ENCODE measurements at regions of chr7 and their contacts with region 1.

Region 1: GRCh38 chr7:3154912-3155494 is 111.3 kb upstream of the CARD11 start:
- DNase-seq: peak; percentile 17 to 33
- ATAC-seq: no peak
- H3K4me3 ChIP-seq: no peak overlapping the region
- H3K27ac ChIP-seq: no peak overlapping the region
- H3K4me1 ChIP-seq: no peaks in the 10 kb centered on the region
- H3K27me3 ChIP-seq: no peaks in the 10 kb centered on the region

Region 2: GRCh38 chr7:2880874-2881533 is 274.0 kb before region 1 on chr7:
- intact Hi-C with region 1: loop called (anchors 5 kb)
- DNase-seq: no peak
- ATAC-seq: no peak
- H3K4me3 ChIP-seq: no peak overlapping the region
- H3K27ac ChIP-seq: no peak overlapping the region
- H3K4me1 ChIP-seq: no peaks in the 10 kb centered on the region
- H3K27me3 ChIP-seq: no peaks in the 10 kb centered on the region

Region 3: GRCh38 chr7:2886900-2887299 is 268.1 kb before region 1 on chr7:
- intact Hi-C with region 1: loop called (anchors 5 kb)
- DNase-seq: no peak
- ATAC-seq: no peak
- H3K4me3 ChIP-seq: no peak overlapping the region
- H3K27ac ChIP-seq: no peak overlapping the region
- H3K4me1 ChIP-seq: no peaks in the 10 kb centered on the region
- H3K27me3 ChIP-seq: no peaks in the 10 kb centered on the region

Region 4: GRCh38 chr7:3082831-3083230 is 72.2 kb before region 1 on chr7:
- intact Hi-C with region 1: no loop called
- DNase-seq: no peak
- ATAC-seq: no peak
- H3K4me3 ChIP-seq: no peak overlapping the region
- H3K27ac ChIP-seq: no peak overlapping the region
- H3K4me1 ChIP-seq: no peaks in the 10 kb centered on the region
- H3K27me3 ChIP-seq: no peaks in the 10 kb centered on the region

Region 5: GRCh38 chr7:3200504-3200903 is 45.5 kb after region 1 on chr7:
- intact Hi-C with region 1: no loop called
- DNase-seq: no peak
- ATAC-seq: no peak
- H3K4me3 ChIP-seq: no peak overlapping the region
- H3K27ac ChIP-seq: no peak overlapping the region
- H3K4me1 ChIP-seq: no peaks in the 10 kb centered on the region
- H3K27me3 ChIP-seq: no peaks in the 10 kb centered on the region